A673 (cell line): ENCODE measurements at regions of chr11 and their contacts with region 1.

Region 1: GRCh38 chr11:22730319-22730718 is 63.9 kb downstream of the GAS2 start:
- DNase-seq: peak; percentile 22
- H3K4me3 ChIP-seq: no peak overlapping the region
- H3K27ac ChIP-seq: no peak overlapping the region
- H3K4me1 ChIP-seq: peaks cover 10% of the 10 kb centered on the region
- H3K27me3 ChIP-seq: no peaks in the 10 kb centered on the region
- CTCF ChIP-seq: peak; percentile 36; the same call in 1 of the 2 replicates

Region 2: GRCh38 chr11:22666688-22667439 is 63.5 kb before region 1 on chr11:
- CTCF ChIA-PET with region 1: no interaction called
- POLR2A ChIA-PET with region 1: no interaction called
- intact Hi-C with region 1: loop called (anchors 2 kb)
- DNase-seq: peak; percentile 33
- H3K4me3 ChIP-seq: peak overlapping the region; percentile 42
- H3K27ac ChIP-seq: no peak overlapping the region
- H3K4me1 ChIP-seq: no peaks in the 10 kb centered on the region
- H3K27me3 ChIP-seq: peaks cover 50% of the 10 kb centered on the region
- CTCF ChIP-seq: no peak

Region 3: GRCh38 chr11:22851477-22851876 is 121.2 kb after region 1 on chr11:
- CTCF ChIA-PET with region 1: no interaction called
- POLR2A ChIA-PET with region 1: no interaction called
- intact Hi-C with region 1: no loop called
- DNase-seq: no peak
- H3K4me3 ChIP-seq: no peak overlapping the region
- H3K27ac ChIP-seq: no peak overlapping the region
- H3K4me1 ChIP-seq: no peaks in the 10 kb centered on the region
- H3K27me3 ChIP-seq: no peaks in the 10 kb centered on the region
- CTCF ChIP-seq: no peak